ENCODE measurements at regions of chr17 and their contacts with region 1.

Region 1: DNA sequence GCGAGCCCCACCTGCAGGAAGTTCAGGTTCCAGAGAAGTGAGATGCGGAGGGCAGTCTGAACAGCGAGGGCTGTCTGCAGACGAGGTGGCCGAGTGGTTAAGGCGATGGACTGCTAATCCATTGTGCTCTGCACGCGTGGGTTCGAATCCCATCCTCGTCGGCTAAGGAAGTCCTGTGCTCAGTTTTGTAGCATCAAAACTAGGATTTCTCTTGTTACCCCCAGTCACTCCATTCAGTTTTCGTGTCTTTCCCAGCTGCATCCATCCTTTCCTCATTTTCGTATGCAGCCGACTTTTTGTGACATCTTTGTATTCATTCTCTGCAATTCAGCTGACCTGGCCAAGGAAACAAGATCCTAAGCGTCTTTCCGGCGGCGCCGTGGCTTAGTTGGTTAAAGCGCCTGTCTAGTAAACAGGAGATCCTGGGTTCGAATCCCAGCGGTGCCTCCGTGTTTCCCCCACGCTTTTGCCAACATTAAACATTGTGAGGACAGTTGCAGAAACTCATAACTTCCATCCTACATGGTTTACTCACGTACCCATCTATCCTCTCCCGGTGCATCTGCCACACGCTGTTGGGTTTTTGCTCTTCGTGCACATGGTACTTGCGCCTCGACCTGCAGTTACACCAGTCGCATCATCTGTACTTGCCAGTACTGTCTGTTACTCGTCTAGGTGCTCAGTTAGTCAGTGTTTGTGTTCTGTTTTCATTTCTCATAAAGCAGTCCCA is 3.0 kb downstream of the BORCS6 start:
- DNase-seq: peak; percentile 93 to 95
- ATAC-seq: peak; percentile 89
- H3K4me3 ChIP-seq: peak overlapping the region in 1 of 2 donors; percentile 53
- H3K27ac ChIP-seq: peak overlapping the region in 1 of 2 donors; percentile 90
- H3K4me1 ChIP-seq: no peaks in the 10 kb centered on the region
- H3K27me3 ChIP-seq: no peaks in the 10 kb centered on the region

Region 2: DNA sequence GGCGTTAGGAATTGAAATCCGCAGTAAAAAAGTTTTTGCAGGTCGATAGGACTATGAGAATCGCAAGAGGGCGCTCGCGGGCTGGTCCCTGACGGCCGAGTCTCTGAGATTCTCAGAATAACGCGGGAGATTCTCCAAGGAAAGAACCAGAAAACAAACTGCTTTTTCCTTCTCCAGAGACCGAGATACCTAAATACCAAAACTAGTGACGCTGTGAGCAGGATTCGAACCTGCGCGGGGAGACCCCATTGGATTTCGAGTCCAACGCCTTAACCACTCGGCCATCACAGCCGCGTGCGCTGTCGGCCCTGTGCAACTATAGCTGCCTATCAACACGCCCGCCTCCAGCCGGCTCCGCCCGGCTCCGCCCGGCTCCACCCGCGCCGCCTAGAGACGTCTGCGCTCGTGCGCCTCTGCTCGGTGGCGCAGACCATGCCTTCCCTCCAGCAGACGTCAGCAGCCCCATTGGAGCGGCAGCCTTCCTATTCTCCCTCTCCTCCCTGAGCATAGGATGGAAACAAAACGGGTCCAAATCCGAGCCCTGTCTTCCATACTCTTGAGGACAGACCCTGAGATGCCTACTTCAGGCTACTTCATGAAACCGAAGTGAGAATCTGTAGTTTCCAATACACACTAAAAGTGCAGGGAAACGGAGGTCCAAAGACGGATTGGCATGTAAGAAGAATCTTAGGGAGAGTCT is 48.1 kb before region 1 on chr17:
- intact Hi-C with region 1: loop called in 1 of 2 experiments (anchors 1 kb)
- DNase-seq: peak; percentile 97 to 98
- ATAC-seq: peak; percentile 95
- H3K4me3 ChIP-seq: no peak overlapping the region
- H3K27ac ChIP-seq: peak overlapping the region in 1 of 2 donors; percentile 26
- H3K4me1 ChIP-seq: peaks cover 0 to 1% of the 10 kb centered on the region in 2 donors
- H3K27me3 ChIP-seq: no peaks in the 10 kb centered on the region

Region 3: GRCh38 chr17:8173056-8173870 is 13.7 kb before region 1 on chr17:
- intact Hi-C with region 1: loop called in 1 of 2 experiments (anchors 2 kb)
- DNase-seq: peak; percentile 82 to 85
- ATAC-seq: peak; percentile 93
- H3K4me3 ChIP-seq: no peak overlapping the region
- H3K27ac ChIP-seq: peak overlapping the region; percentile 49 to 81
- H3K4me1 ChIP-seq: no peaks in the 10 kb centered on the region
- H3K27me3 ChIP-seq: no peaks in the 10 kb centered on the region

Region 4: DNA sequence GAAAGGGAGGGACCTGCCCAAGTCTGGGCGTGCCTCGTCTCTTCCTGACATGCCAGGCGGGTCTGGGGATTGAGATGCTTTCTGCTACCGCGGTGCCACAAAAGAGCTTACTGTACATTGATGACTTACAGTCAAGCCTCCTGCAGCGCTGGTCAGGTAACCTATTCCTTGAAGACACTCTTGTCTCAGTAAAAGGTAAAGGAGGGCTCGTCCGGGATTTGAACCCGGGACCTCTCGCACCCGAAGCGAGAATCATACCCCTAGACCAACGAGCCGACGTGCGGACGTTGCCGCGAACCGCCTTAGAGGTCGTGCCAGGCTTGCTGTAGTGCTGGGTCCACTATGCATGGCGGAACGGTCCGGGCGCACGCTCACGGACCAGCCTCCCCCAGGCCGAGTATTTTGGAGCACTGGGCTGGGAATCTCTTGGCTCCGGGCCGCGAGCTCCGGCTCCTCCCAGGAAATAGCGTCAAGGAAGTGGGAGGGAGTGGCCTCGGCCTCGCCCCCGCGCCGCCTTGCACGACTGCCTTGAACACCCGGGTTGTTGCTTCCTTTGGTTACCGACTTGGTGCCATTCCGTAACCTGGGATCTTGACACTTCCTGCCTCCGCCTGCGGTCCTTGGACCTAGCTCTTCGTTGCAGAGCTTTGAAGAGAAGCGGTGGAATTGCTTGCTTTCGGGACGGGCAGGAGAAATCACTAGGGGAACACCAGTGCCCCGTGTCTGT is 35.8 kb after region 1 on chr17:
- intact Hi-C with region 1: loop called (anchors 1 kb)
- DNase-seq: peak; percentile 97
- ATAC-seq: peak; percentile 88
- H3K4me3 ChIP-seq: peak overlapping the region; percentile 48 to 62
- H3K27ac ChIP-seq: peak overlapping the region; percentile 40 to 95
- H3K4me1 ChIP-seq: no peaks in the 10 kb centered on the region
- H3K27me3 ChIP-seq: no peaks in the 10 kb centered on the region

Region 5: GRCh38 chr17:8248751-8249607 is 62.0 kb after region 1 on chr17 and contains the start of gene PFAS:
- intact Hi-C with region 1: loop called in 1 of 2 experiments (anchors 2 kb)
- DNase-seq: peak; percentile 97 to 99
- ATAC-seq: peak; percentile 93
- H3K4me3 ChIP-seq: peak within 1 kb of the TSS; percentile 78 to 80
- H3K27ac ChIP-seq: peak within 1 kb of the TSS; percentile 32 to 85
- H3K4me1 ChIP-seq: no peaks in the 10 kb centered on the region
- H3K27me3 ChIP-seq: no peaks in the 10 kb centered on the region
- total RNA-seq, gene PFAS: 21.3 to 25.4 TPM